ENCODE measurements at regions of chr2 and their contacts with region 1.

Region 1: GRCh38 chr2:197369933-197370320 is 59.3 kb upstream of the ANKRD44 start:
- DNase-seq: peak in 1 of 14 experiments; percentile 19
- ATAC-seq: no peak
- H3K4me3 ChIP-seq: no peak overlapping the region
- H3K4me3 Mint-ChIP-seq: no peak overlapping the region
- H3K27ac ChIP-seq: no peak overlapping the region
- H3K27ac Mint-ChIP-seq: peak overlapping the region; percentile 34
- H3K4me1 ChIP-seq: peaks cover 10% of the 10 kb centered on the region
- H3K4me1 Mint-ChIP-seq: peaks cover 29% of the 10 kb centered on the region
- H3K27me3 ChIP-seq: no peaks in the 10 kb centered on the region
- H3K27me3 Mint-ChIP-seq: no peaks in the 10 kb centered on the region
- CTCF ChIP-seq: no peak

Region 2: DNA sequence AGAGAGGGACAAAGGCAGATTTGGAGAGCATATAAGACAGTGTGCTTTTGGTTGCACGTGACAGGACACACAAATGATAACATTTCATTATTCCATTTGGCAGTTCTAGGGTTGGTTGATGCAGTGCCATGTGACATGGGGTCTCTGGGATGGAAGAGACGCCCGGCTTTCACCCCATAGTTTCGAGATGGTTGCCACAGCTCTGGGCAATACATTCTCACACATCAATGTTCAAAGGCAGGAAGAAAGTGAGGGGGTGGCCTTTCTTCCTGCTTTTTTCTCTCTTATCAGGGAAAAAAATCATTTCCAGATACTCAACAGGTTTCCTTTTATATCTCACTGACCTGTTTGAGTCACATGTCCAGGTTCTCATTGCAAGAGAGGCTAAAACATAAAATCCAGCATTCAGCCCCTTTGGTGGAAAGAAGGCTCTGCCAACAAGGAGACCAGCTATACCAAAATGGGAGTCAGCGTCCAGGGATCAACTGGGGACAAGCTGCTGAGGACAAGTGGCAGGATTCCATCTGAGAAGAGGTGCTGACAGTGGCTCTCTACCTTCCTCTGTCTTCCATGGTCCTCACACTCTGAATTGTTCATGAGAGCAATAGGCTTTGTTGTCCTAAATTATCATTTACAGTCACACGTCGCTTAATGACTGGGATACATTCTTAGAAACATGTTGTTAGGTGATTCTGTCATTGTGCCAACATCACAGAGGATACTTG is 30.3 kb before region 1 on chr2:
- CTCF ChIA-PET with region 1: interaction called, 3 read pairs
- POLR2A ChIA-PET with region 1: interaction called, 3 read pairs
- intact Hi-C with region 1: loop called in 1 of 2 experiments (anchors 5 kb)
- DNase-seq: no peak
- ATAC-seq: no peak
- H3K4me3 ChIP-seq: no peak overlapping the region
- H3K4me3 Mint-ChIP-seq: no peak overlapping the region
- H3K27ac ChIP-seq: no peak overlapping the region
- H3K27ac Mint-ChIP-seq: no peak overlapping the region
- H3K4me1 ChIP-seq: peaks cover 13% of the 10 kb centered on the region
- H3K4me1 Mint-ChIP-seq: peaks cover 19% of the 10 kb centered on the region
- H3K27me3 ChIP-seq: no peaks in the 10 kb centered on the region
- H3K27me3 Mint-ChIP-seq: no peaks in the 10 kb centered on the region
- CTCF ChIP-seq: no peak

Region 3: DNA sequence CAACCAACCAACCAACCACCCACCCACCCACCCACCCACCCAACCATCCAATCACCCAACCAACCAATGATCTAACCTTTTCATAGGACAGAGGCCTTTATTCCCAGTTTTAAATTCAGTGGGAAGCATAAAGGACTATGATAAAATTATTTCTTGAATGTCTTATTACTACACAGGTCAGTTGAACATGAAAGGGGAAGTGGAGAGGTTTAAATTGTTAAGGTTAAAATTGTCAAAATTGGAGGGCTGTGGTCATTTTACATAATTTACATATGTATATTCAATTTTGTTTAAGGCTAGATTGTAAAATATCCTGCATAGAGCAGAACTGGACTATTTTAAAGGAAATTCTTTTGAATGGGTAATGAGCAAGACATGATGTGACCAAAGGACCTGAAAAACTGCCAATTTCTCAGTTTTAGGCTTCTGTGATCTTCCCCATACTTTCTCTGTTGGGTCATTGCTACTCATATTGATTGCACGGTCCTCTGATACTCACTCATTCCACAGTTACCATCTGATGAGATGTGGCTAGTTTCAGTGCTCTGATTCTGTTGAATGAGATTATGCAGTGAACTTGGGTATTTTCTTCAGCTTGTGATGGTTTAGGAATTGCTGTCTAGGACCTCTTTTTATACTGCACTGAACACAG is 561.9 kb after region 1 on chr2:
- CTCF ChIA-PET with region 1: no interaction called
- POLR2A ChIA-PET with region 1: no interaction called
- intact Hi-C with region 1: no loop called
- DNase-seq: no peak
- ATAC-seq: no peak
- H3K4me3 ChIP-seq: no peak overlapping the region
- H3K4me3 Mint-ChIP-seq: no peak overlapping the region
- H3K27ac ChIP-seq: no peak overlapping the region
- H3K27ac Mint-ChIP-seq: no peak overlapping the region
- H3K4me1 ChIP-seq: no peaks in the 10 kb centered on the region
- H3K4me1 Mint-ChIP-seq: peaks cover 71% of the 10 kb centered on the region
- H3K27me3 ChIP-seq: no peaks in the 10 kb centered on the region
- H3K27me3 Mint-ChIP-seq: no peaks in the 10 kb centered on the region
- CTCF ChIP-seq: no peak

Measured in CD4-positive, alpha-beta T cell (primary cell).